Naive thymus-derived CD4-positive, alpha-beta T cell (primary cell): ENCODE measurements at regions of chr11 and their contacts with region 1.

Region 1: GRCh38 chr11:5643585-5643984 is 18.8 kb downstream of the TRIM34 start:
- DNase-seq: no peak
- ATAC-seq: no peak
- H3K4me3 ChIP-seq: no peak overlapping the region
- H3K4me3 Mint-ChIP-seq: no peak overlapping the region
- H3K27ac ChIP-seq: no peak overlapping the region
- H3K27ac Mint-ChIP-seq: no peak overlapping the region
- H3K4me1 ChIP-seq: no peaks in the 10 kb centered on the region
- H3K4me1 Mint-ChIP-seq: peaks cover 0 to 6% (median 0%) of the 10 kb centered on the region in 7 donors
- H3K27me3 ChIP-seq: no peaks in the 10 kb centered on the region
- H3K27me3 Mint-ChIP-seq: no peaks in the 10 kb centered on the region

Region 2: GRCh38 chr11:5631969-5632635 is 11.5 kb before region 1 on chr11:
- CTCF ChIA-PET with region 1: no interaction called
- POLR2A ChIA-PET with region 1: no interaction called
- intact Hi-C with region 1: loop called in 1 of 2 experiments (anchors 2 kb)
- DNase-seq: no peak
- ATAC-seq: no peak
- H3K4me3 ChIP-seq: no peak overlapping the region
- H3K4me3 Mint-ChIP-seq: no peak overlapping the region
- H3K27ac ChIP-seq: no peak overlapping the region
- H3K27ac Mint-ChIP-seq: peak overlapping the region in 1 of 9 donors; percentile 36
- H3K4me1 ChIP-seq: peaks cover 0 to 7% of the 10 kb centered on the region in 2 donors
- H3K4me1 Mint-ChIP-seq: peaks cover 17 to 51% (median 44%) of the 10 kb centered on the region in 7 donors
- H3K27me3 ChIP-seq: no peaks in the 10 kb centered on the region
- H3K27me3 Mint-ChIP-seq: no peaks in the 10 kb centered on the region

Region 3: DNA sequence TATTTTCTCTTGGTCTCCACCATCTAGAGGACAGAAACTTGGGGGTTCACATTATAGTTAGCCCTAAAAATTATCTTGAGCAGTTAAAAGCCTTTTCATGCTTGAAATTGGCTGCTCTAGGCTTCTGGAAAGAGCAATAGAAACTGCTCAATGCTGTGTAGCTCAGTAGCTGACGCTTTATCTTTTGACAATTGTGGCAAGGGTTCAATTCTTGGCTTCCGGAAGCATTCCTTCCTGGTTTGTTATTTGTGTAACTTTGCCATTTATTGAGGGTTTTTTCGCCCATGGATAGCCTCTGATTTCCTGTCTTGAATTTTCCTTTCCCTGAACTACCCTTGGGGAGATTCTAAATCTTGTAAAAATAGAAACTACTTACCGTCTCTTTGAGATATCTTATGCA is 397.3 kb after region 1 on chr11:
- CTCF ChIA-PET with region 1: no interaction called
- POLR2A ChIA-PET with region 1: no interaction called
- intact Hi-C with region 1: no loop called
- DNase-seq: no peak
- ATAC-seq: no peak
- H3K4me3 ChIP-seq: no peak overlapping the region
- H3K4me3 Mint-ChIP-seq: no peak overlapping the region
- H3K27ac ChIP-seq: no peak overlapping the region
- H3K27ac Mint-ChIP-seq: no peak overlapping the region
- H3K4me1 ChIP-seq: no peaks in the 10 kb centered on the region
- H3K4me1 Mint-ChIP-seq: no peaks in the 10 kb centered on the region
- H3K27me3 ChIP-seq: no peaks in the 10 kb centered on the region
- H3K27me3 Mint-ChIP-seq: peaks cover 5 to 28% (median 19%) of the 10 kb centered on the region in 5 donors